ENCODE measurements at regions of chr1 and their contacts with region 1.

Region 1: GRCh38 chr1:157369808-157370521 is 182.3 kb downstream of the FCRL5 start:
- ATAC-seq: peak; percentile 41 to 85 (median 70)
- H3K4me3 ChIP-seq: no peak overlapping the region
- H3K27ac ChIP-seq: no peak overlapping the region
- H3K4me1 ChIP-seq: no peaks in the 10 kb centered on the region

Region 2: GRCh38 chr1:156172696-156173470 is 1197.1 kb before region 1 on chr1:
- in situ Hi-C with region 1: no loop called
- ATAC-seq: no peak
- H3K4me3 ChIP-seq: no peak overlapping the region
- H3K27ac ChIP-seq: no peak overlapping the region
- H3K4me1 ChIP-seq: no peaks in the 10 kb centered on the region

Region 3: GRCh38 chr1:157193702-157194391 is 176.1 kb before region 1 on chr1:
- in situ Hi-C with region 1: loop called in 2 of 9 experiments (anchors 25 kb)
- ATAC-seq: peak; percentile 43 to 79 (median 59)
- H3K4me3 ChIP-seq: no peak overlapping the region
- H3K27ac ChIP-seq: no peak overlapping the region
- H3K4me1 ChIP-seq: no peaks in the 10 kb centered on the region

Region 4: DNA sequence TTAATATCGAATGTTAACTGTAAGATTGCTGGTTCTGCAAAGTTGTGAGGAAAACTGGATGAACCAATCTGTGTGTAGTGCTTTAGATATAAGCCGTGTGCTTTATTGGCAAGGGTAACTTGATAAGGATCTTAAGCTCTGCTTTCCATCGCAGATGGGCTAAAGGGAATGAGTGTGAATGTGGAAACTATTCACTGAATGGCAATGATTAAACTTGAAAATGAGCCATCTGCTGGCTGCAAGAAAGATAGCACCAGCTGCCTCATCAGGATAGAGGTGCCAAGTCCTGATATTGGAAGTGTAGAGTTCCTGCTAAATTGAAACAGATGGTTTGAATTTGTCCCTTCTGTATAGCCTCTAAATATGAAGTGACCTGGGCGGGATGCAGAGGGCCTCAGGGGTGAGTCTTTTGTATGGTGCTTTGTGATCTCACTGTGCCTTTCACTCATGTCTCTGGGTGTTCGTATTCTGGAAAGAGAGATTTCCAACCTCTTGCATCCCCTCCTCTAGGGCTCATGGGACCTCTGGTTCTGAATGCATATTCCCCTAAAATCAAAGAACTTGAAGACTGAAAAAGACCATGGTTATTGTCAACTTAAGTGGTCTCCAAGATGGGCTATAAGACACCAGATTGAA is 321.4 kb after region 1 on chr1:
- in situ Hi-C with region 1: loop called in 1 of 9 experiments (anchors 25 kb)
- ATAC-seq: peak; percentile 57 to 90 (median 74)
- H3K4me3 ChIP-seq: no peak overlapping the region
- H3K27ac ChIP-seq: no peak overlapping the region
- H3K4me1 ChIP-seq: no peaks in the 10 kb centered on the region

Measured in motor neuron (in vitro differentiated cells).